Activated B cell treated with CpG ODN at 0.5 μM for 24 hours (primary cell): ENCODE measurements at regions of chr11 and their contacts with region 1.

Region 1: GRCh38 chr11:4187055-4187988 is 92.7 kb downstream of the RRM1 start:
- DNase-seq: peak; percentile 87
- ATAC-seq: peak; percentile 95
- H3K4me3 Mint-ChIP-seq: peak overlapping the region; percentile 75
- H3K27ac Mint-ChIP-seq: no peak overlapping the region
- H3K4me1 Mint-ChIP-seq: peaks cover 4% of the 10 kb centered on the region
- H3K27me3 Mint-ChIP-seq: peaks cover 20% of the 10 kb centered on the region
- CTCF ChIP-seq: peak; percentile 91

Region 2: GRCh38 chr11:4167758-4168157 is 19.6 kb before region 1 on chr11:
- CTCF ChIA-PET with region 1: no interaction called
- POLR2A ChIA-PET with region 1: no interaction called
- intact Hi-C with region 1: no loop called
- DNase-seq: no peak
- ATAC-seq: no peak
- H3K4me3 Mint-ChIP-seq: no peak overlapping the region
- H3K27ac Mint-ChIP-seq: no peak overlapping the region
- H3K4me1 Mint-ChIP-seq: no peaks in the 10 kb centered on the region
- H3K27me3 Mint-ChIP-seq: no peaks in the 10 kb centered on the region
- CTCF ChIP-seq: no peak

Region 3: DNA sequence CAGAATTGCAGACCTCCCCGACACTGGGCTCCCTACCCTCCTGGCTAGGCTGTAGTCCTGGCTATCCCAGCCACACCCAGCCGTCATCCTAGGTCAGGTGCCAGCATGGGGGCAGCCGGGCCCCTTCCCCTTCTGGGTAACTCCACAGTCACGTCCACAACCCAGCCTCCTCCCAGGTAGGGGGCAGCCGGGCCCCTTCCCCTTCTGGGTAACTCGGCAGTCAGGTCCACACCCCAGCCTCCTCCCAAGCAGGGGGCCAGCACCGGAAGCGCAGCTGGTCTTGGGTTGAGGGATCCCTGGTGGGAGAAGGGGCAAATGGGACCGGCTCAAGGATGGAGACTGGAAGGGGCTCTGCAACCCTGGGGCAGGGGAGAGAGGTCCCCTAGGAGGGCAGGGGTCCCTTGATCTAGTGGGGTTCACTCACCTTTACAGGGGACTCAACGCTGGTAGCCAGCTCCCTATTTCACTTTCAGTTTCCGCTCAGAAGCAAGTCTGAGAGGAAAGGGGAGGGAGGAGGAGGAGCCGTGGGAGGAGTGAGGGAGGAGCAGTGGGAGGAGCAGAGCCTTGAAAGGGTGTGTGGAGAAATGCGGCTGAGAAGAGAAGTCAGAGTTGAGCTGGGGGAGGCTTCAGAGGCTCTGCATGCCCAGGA is 206.0 kb after region 1 on chr11 and contains the start of gene TRIM21:
- CTCF ChIA-PET with region 1: no interaction called
- POLR2A ChIA-PET with region 1: no interaction called
- intact Hi-C with region 1: no loop called
- DNase-seq: peak; percentile 74
- ATAC-seq: peak; percentile 99
- H3K4me3 Mint-ChIP-seq: peak within 1 kb of the TSS; percentile 95
- H3K27ac Mint-ChIP-seq: peak within 1 kb of the TSS; percentile 90
- H3K4me1 Mint-ChIP-seq: peaks cover 32% of the 10 kb centered on the region
- H3K27me3 Mint-ChIP-seq: peaks cover 8% of the 10 kb centered on the region
- CTCF ChIP-seq: no peak
- total RNA-seq, gene TRIM21: 27.7 and 30.8 TPM in 2 replicates

Region 4: DNA sequence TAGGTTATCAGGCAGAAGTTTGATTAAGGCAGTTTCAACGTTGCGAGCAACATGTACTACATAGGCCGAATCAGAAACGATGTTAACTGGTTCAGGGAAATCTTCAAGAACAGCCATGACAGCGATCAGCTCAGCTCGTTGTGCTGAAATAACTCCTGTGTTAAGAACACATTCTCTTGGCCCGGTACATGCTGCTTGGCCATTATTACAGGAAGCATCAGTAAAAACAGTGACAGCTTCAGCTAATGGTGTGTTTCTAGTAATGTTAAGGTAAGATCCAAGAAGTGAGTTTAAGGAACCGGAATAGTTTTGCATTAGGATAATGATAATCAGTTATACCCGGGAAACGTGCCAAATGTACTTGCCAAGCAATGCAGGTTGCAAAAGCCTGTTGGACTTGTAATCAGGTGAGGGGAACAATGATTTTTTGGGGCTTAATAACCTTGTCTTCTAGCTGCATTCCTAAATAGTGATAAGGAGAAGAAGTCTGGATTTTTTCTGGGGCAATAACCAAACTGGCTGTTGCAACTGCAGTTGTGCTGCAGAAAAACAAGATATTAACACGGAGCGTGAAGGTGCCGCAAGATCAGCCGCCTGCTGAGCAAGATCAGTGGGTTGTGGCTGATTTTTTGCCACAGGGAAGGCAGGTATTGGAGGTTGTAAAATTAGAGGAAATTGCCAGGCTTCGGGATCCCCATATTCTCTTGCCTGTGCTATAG is 309.4 kb after region 1 on chr11:
- CTCF ChIA-PET with region 1: interaction called, 73 read pairs
- POLR2A ChIA-PET with region 1: no interaction called
- intact Hi-C with region 1: loop called (anchors 1 kb)
- DNase-seq: no peak
- ATAC-seq: no peak
- H3K4me3 Mint-ChIP-seq: no peak overlapping the region
- H3K27ac Mint-ChIP-seq: no peak overlapping the region
- H3K4me1 Mint-ChIP-seq: peaks cover 7% of the 10 kb centered on the region
- H3K27me3 Mint-ChIP-seq: peaks cover 7% of the 10 kb centered on the region
- CTCF ChIP-seq: no peak

Region 5: DNA sequence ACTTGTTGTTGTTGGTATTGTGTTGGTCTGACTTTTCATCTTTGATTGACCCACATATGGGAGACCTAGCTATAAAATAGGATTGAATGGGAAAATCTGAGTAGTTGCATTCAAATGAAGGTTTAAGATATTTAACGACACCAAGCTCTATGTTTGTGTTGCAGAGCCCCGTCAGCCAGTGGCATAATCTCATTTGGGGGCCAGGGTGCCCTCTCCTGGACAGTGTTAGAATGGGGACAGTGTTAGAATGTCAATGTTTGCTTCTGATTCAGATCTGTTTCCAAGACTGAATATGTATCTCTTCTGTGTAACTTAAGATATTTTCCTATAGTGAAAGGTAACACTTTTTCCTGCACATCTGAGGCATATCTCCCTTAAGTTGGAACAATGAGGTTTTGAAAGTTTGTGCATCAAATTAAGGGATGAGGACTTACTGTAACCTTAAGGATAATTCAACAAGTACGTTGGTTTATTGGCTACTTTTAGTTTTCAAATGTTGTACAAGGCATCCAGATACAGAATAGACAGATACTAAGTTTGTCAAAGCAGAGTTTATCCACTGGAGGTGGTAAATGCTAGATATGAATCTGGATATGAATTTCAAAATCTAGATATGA is 352.4 kb after region 1 on chr11:
- CTCF ChIA-PET with region 1: interaction called, 73 read pairs
- POLR2A ChIA-PET with region 1: no interaction called
- intact Hi-C with region 1: loop called (anchors 1 kb)
- DNase-seq: no peak
- ATAC-seq: peak; percentile 37
- H3K4me3 Mint-ChIP-seq: no peak overlapping the region
- H3K27ac Mint-ChIP-seq: no peak overlapping the region
- H3K4me1 Mint-ChIP-seq: no peaks in the 10 kb centered on the region
- H3K27me3 Mint-ChIP-seq: peaks cover 4% of the 10 kb centered on the region
- CTCF ChIP-seq: no peak

Region 6: GRCh38 chr11:4636962-4637661 is 449.8 kb after region 1 on chr11 and contains the start of gene OR51D1:
- CTCF ChIA-PET with region 1: interaction called, 6 read pairs
- POLR2A ChIA-PET with region 1: no interaction called
- intact Hi-C with region 1: loop called (anchors 10 kb)
- DNase-seq: peak; percentile 39
- ATAC-seq: peak; percentile 84
- H3K4me3 Mint-ChIP-seq: no peak within 1 kb of the TSS
- H3K27ac Mint-ChIP-seq: no peak within 1 kb of the TSS
- H3K4me1 Mint-ChIP-seq: no peaks in the 10 kb centered on the region
- H3K27me3 Mint-ChIP-seq: peaks cover 4% of the 10 kb centered on the region
- CTCF ChIP-seq: peak; percentile 59
- total RNA-seq, gene OR51D1: not detected in 2 replicates

Region 7: DNA sequence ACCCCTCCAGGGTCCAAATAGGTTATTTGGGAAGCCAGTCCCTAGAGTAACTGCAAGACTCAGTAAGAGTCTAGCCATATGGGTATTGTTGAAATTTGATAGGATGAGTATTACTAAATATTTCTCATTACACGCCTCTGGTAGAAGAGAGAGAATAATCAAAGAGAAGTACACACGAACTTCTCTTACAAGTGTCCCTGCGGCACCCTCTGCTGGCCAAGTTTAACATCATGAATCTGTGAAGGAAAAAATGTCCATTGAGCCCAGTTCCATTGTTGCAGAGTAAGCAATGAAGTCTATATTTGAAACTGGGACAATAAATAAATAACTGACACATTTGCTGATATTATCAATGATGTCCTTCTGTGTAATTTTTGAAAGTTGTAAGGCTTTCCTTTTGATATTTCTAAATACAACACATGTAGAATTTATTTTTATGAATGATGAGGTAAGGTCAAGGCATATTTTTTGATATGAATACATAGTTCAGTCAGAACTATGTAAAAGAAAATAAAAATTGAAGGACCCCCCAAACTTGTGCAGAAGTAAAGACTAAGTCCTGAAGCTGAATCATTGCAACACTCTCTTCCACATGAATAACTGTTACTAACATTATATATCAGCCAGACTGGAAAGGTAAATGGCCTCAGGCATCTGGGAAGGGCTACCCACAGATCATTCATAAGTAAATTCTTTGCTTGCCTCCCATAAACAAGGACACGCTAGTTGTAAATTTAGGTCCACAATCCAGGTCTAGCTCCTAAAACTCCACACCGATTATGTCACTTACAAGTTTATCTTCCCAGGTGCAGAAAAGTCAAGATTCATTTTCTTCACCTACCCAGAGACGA is 817.3 kb after region 1 on chr11:
- CTCF ChIA-PET with region 1: interaction called, 3 read pairs
- POLR2A ChIA-PET with region 1: no interaction called
- intact Hi-C with region 1: loop called (anchors 1 kb)
- DNase-seq: no peak
- ATAC-seq: no peak
- H3K4me3 Mint-ChIP-seq: no peak overlapping the region
- H3K27ac Mint-ChIP-seq: no peak overlapping the region
- H3K4me1 Mint-ChIP-seq: no peaks in the 10 kb centered on the region
- H3K27me3 Mint-ChIP-seq: peaks cover 2% of the 10 kb centered on the region
- CTCF ChIP-seq: no peak